Naive thymus-derived CD4-positive, alpha-beta T cell (primary cell): ENCODE measurements at regions of chr3 and their contacts with region 1.

Region 1: GRCh38 chr3:141105828-141106628 is 54.9 kb downstream of the SPSB4 start:
- DNase-seq: peak in 8 of 9 donors; percentile 21 to 61 (median 50)
- ATAC-seq: peak; percentile 72
- H3K4me3 ChIP-seq: no peak overlapping the region
- H3K4me3 Mint-ChIP-seq: no peak overlapping the region
- H3K27ac ChIP-seq: no peak overlapping the region
- H3K27ac Mint-ChIP-seq: no peak overlapping the region
- H3K4me1 ChIP-seq: no peaks in the 10 kb centered on the region
- H3K4me1 Mint-ChIP-seq: peaks cover 0 to 5% (median 0%) of the 10 kb centered on the region in 7 donors
- H3K27me3 ChIP-seq: no peaks in the 10 kb centered on the region
- H3K27me3 Mint-ChIP-seq: peaks cover 0 to 6% (median 0%) of the 10 kb centered on the region in 5 donors

Region 2: GRCh38 chr3:140898340-140899180 is 207.5 kb before region 1 on chr3:
- CTCF ChIA-PET with region 1: interaction called, 4 read pairs
- POLR2A ChIA-PET with region 1: no interaction called
- intact Hi-C with region 1: loop called in 1 of 2 experiments (anchors 1 kb)
- DNase-seq: peak in 7 of 9 donors; percentile 12 to 60 (median 38)
- ATAC-seq: peak; percentile 83
- H3K4me3 ChIP-seq: no peak overlapping the region
- H3K4me3 Mint-ChIP-seq: no peak overlapping the region
- H3K27ac ChIP-seq: no peak overlapping the region
- H3K27ac Mint-ChIP-seq: no peak overlapping the region
- H3K4me1 ChIP-seq: no peaks in the 10 kb centered on the region
- H3K4me1 Mint-ChIP-seq: peaks cover 0 to 2% (median 0%) of the 10 kb centered on the region in 7 donors
- H3K27me3 ChIP-seq: no peaks in the 10 kb centered on the region
- H3K27me3 Mint-ChIP-seq: peaks cover 22 to 35% (median 25%) of the 10 kb centered on the region in 5 donors

Region 3: GRCh38 chr3:140922634-140923033 is 183.4 kb before region 1 on chr3:
- CTCF ChIA-PET with region 1: interaction called, 4 read pairs
- POLR2A ChIA-PET with region 1: no interaction called
- intact Hi-C with region 1: loop called in 1 of 2 experiments (anchors 1 kb)
- DNase-seq: peak in 4 of 9 donors; percentile 5 to 26 (median 12)
- ATAC-seq: peak; percentile 60
- H3K4me3 ChIP-seq: no peak overlapping the region
- H3K4me3 Mint-ChIP-seq: no peak overlapping the region
- H3K27ac ChIP-seq: no peak overlapping the region
- H3K27ac Mint-ChIP-seq: no peak overlapping the region
- H3K4me1 ChIP-seq: no peaks in the 10 kb centered on the region
- H3K4me1 Mint-ChIP-seq: no peaks in the 10 kb centered on the region
- H3K27me3 ChIP-seq: no peaks in the 10 kb centered on the region
- H3K27me3 Mint-ChIP-seq: peaks cover 11 to 38% (median 21%) of the 10 kb centered on the region in 5 donors

Region 4: DNA sequence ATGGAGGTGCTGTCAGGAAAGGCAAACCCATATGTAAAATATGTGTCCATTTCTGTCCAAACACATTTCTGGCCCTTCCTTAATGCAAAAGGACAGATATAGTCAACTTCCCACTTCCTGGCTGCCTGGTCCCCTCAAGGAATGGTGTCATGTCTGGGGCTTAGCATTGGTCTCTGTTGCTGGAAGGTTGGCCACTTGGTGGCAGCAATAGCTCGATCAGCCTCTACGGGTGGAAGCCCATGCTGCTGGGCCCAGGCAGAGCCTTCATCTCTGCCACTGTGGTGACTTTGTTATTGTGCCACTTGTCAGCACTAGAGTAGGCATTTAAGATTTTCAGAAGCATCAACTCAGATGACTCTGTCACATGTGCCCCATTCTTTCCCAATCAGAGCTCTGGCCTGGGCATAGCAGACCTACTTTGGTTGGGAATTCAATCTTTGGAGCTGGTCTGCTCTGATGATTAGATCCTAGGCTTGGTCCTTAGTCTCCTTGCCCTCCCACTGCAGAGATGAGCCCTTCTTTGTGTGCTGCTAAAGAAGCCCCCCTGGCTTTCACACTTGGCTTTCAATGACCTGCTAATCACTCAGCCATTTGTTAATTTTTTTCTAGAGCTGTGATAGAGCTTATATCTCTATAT is 105.9 kb before region 1 on chr3:
- CTCF ChIA-PET with region 1: interaction called, 3 read pairs
- POLR2A ChIA-PET with region 1: no interaction called
- intact Hi-C with region 1: loop called (anchors 1 kb)
- DNase-seq: peak in 8 of 9 donors; percentile 11 to 48 (median 38)
- ATAC-seq: peak; percentile 85
- H3K4me3 ChIP-seq: no peak overlapping the region
- H3K4me3 Mint-ChIP-seq: no peak overlapping the region
- H3K27ac ChIP-seq: no peak overlapping the region
- H3K27ac Mint-ChIP-seq: no peak overlapping the region
- H3K4me1 ChIP-seq: no peaks in the 10 kb centered on the region
- H3K4me1 Mint-ChIP-seq: peaks cover 0 to 8% (median 0%) of the 10 kb centered on the region in 7 donors
- H3K27me3 ChIP-seq: no peaks in the 10 kb centered on the region
- H3K27me3 Mint-ChIP-seq: peaks cover 0 to 13% (median 6%) of the 10 kb centered on the region in 5 donors

Region 5: DNA sequence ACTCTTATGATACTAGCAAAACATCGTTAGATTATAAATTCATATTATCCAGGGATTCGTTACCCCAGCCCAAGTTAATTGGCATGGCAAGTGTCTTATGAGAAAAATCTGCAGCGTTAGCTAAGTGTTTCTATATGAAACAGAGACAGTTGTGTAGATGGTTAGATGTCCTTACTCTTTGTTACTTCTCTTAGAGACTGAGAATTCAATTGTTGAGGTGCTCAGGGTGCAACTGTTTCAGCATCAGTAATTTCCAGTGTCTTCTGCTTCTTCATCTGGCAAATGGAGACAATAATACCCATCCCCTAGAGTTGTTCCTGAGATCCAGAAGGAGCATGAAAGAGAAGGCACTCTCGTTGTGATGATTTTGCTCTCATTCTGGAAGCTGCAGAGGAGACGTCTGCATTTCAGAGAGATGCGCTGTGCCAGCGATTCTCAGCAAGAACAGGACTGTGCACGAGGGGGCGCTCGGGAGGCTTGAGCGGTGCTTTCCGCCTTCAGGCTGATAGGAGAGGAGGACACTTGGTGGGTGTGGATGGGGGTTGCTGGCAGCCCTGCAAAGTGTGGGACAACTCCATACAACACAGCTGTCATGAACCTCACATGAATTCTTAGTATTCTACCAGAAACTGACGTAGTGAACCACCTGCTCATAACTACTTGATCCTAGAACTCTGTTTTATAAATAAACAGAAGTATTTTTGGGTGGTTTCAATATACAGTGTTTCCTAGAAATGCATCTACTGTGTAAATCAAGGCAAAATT is 94.6 kb before region 1 on chr3:
- CTCF ChIA-PET with region 1: no interaction called
- POLR2A ChIA-PET with region 1: no interaction called
- intact Hi-C with region 1: loop called (anchors 1 kb)
- DNase-seq: peak; percentile 40 to 74 (median 64)
- ATAC-seq: peak; percentile 98
- H3K4me3 ChIP-seq: no peak overlapping the region
- H3K4me3 Mint-ChIP-seq: no peak overlapping the region
- H3K27ac ChIP-seq: no peak overlapping the region
- H3K27ac Mint-ChIP-seq: no peak overlapping the region
- H3K4me1 ChIP-seq: peaks cover 0 to 3% of the 10 kb centered on the region in 2 donors
- H3K4me1 Mint-ChIP-seq: peaks cover 0 to 7% (median 5%) of the 10 kb centered on the region in 7 donors
- H3K27me3 ChIP-seq: peaks cover 0 to 4% of the 10 kb centered on the region in 2 donors
- H3K27me3 Mint-ChIP-seq: peaks cover 16 to 52% (median 25%) of the 10 kb centered on the region in 5 donors